ENCODE measurements at regions of chr6 and their contacts with region 1.

Region 1: GRCh38 chr6:32885698-32886286 is 31.8 kb downstream of the PSMB9 start:
- DNase-seq: no peak

Region 2: DNA sequence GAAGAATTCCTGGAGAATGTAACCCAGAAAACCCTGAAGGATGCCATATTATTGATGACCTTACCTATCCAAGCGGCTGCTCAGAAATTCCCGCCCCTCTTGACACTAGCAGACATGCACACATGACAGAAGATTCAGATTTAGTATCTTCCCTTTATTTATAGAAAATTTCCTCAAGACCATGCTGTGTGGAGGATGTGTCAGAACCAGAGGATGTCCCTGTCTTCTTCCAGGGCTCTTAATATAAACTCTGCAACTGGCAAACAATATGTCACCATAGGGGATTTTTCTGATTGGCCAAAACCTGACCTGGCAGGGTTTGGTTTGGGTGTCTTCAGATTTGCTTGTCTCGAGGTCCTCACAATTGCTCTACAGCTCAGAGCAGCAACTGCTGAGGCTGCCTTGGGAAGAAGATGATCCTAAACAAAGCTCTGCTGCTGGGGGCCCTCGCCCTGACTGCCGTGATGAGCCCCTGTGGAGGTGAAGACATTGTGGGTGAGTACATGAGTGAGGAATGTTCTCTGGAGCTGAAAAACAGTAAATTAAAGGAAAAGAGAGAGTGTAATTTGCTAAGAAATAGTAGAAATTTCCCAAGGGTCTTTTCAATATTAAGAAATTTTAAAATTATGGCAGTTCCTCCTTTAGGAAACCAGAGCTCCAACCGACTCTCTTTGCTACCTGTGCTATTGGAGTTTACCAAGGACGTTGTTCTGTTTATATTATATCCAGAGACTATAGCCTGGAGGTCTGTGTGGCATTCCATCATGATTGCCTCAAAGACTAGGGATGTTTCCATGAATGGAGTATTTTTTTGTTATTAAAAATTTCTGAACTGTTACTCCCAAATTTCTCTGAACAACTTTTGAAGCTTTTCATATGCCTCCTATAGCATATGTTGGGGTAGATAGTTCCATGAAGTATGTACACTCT is 144.5 kb before region 1 on chr6 and contains the start of gene HLA-DQA2:
- intact Hi-C with region 1: no loop called
- DNase-seq: no peak
- total RNA-seq, gene HLA-DQA2: 2.8 TPM

Region 3: GRCh38 chr6:32933636-32934085 is 47.9 kb after region 1 on chr6:
- intact Hi-C with region 1: loop called (anchors 5 kb)
- DNase-seq: peak; percentile 88